Mammary epithelial cell (primary cell): ENCODE measurements at regions of chr17 and their contacts with region 1.

Region 1: GRCh38 chr17:41648411-41649195 is 24.2 kb upstream of the KRT17 start:
- DNase-seq: peak; percentile 76
- H3K4me3 ChIP-seq: no peak overlapping the region
- H3K27ac ChIP-seq: peak overlapping the region; percentile 77
- H3K4me1 ChIP-seq: peaks cover 70% of the 10 kb centered on the region
- H3K27me3 ChIP-seq: no peaks in the 10 kb centered on the region
- CTCF ChIP-seq: peak; percentile 83 to 97

Region 2: DNA sequence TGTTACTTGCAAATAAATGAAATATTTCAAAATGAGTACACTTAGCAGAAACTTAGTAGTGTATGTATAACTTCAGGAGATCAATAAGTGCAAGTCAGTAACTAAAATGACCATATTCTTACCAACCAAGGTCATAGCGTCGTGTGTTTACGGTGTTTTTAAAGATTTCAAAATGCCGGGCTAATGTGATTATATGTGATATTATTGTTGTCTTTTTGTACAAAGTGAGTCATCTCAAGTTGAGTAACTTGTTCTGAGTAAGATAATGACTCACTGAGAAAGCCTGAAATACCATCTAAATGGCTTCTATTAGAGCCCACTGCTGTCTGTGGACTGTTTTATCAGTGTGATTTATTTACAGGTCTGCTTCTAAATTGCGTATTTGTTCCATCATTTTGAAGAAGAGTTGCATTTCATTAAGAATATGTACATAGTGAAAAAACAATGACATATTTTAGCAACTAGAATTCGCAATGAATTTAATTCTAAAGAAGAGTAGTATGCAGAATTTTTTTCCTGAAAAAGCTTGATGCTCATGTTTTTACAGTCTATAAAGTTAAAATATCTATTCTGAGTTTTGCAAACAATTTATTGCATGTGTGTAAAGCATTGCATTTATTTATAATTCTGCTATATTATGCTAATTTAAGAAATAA is 794.3 kb before region 1 on chr17:
- CTCF ChIA-PET with region 1: interaction called, 18 read pairs
- dilution Hi-C with region 1: no loop called
- in situ Hi-C with region 1: no loop called
- intact Hi-C with region 1: loop called (anchors 1 kb)
- DNase-seq: peak; percentile 84
- H3K4me3 ChIP-seq: no peak overlapping the region
- H3K27ac ChIP-seq: no peak overlapping the region
- H3K4me1 ChIP-seq: peaks cover 20% of the 10 kb centered on the region
- H3K27me3 ChIP-seq: no peaks in the 10 kb centered on the region
- CTCF ChIP-seq: no peak

Region 3: DNA sequence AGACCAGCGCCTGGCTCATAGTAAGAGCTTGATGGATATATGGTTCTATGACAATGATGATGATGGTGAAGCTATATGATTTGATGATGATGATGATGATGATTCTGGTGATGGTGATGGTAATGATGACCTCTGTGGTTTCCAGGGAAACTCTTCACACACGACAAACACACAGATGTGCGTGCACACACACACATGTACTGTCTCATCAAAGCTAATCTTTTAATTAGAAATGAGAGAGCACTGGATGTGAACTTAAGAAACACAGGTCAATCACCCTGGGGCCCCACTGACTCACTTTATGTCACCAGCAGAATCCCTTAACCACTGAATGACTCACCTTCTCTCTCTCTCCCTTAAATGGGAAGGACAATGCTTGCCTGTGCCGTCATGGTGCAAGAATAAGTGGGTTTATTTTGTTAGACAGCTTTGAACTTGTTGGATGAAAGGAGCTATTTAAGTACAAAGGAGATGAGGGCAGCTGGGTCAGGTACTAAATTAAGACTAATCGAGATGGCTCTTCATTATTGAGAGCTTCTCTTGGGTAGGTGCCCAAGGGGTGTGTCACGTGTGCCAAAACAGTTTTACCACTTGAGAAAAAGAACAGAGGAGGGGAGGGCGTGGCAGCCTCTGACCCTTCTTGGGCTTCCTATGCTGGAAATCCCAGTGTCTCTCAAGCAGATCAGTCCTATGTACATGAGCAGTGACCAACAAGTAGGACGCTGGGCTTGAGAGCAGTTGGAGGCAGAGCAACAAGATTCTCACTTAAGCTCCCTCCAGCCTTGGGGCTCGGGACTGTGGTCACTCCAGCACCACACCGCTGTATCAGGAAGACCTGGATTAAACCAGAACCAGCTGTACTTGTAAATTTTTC is 244.6 kb before region 1 on chr17:
- CTCF ChIA-PET with region 1: no interaction called
- dilution Hi-C with region 1: loop called (anchors 5 kb)
- in situ Hi-C with region 1: no loop called
- intact Hi-C with region 1: loop called (anchors 5 kb)
- DNase-seq: peak; percentile 100
- H3K4me3 ChIP-seq: no peak overlapping the region
- H3K27ac ChIP-seq: peak overlapping the region; percentile 94
- H3K4me1 ChIP-seq: peaks cover 32% of the 10 kb centered on the region
- H3K27me3 ChIP-seq: no peaks in the 10 kb centered on the region
- CTCF ChIP-seq: no peak

Region 4: DNA sequence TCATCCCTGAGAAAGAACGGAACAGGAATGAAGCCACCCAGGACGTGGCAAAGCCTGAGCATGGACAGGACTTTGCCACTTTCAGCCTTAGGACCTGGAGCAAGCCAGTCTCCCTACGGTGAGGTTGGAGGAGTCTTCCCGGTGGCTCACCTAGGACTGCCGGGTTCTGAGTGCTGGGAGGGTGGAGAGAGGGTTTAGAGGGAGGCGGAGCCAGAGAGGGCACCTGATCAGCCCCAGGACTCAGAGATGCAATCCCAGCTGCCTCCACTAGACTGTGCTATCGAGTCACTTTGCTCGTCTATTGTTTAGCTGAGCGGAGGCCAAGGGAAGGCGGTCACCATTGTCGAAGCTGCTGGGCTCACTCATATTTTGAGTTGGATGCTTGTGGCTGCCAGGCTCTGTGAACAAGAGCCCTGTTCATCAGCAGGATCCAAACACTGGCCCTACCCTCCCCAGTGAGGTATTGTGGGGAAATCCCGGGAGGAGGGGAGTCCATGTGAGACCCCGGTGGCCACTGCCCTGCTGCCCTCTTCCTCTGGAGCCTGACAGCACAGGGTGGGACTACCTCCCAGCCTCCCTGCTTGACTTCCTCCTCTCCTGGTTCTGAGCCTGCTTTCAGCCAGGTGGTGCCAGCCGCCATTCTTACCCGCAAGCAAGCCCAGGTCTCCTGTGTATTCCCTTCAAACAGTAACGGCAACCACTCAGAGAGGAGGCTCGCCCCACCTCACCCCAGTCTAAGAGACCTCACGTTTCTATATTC is 68.9 kb before region 1 on chr17:
- CTCF ChIA-PET with region 1: interaction called, 3 read pairs
- dilution Hi-C with region 1: no loop called
- in situ Hi-C with region 1: no loop called
- intact Hi-C with region 1: loop called (anchors 1 kb)
- DNase-seq: peak; percentile 98
- H3K4me3 ChIP-seq: no peak overlapping the region
- H3K27ac ChIP-seq: peak overlapping the region; percentile 97
- H3K4me1 ChIP-seq: peaks cover 63% of the 10 kb centered on the region
- H3K27me3 ChIP-seq: no peaks in the 10 kb centered on the region
- CTCF ChIP-seq: peak; percentile 93 to 96

Region 5: GRCh38 chr17:41615454-41615853 is 33.1 kb before region 1 on chr17:
- CTCF ChIA-PET with region 1: no interaction called
- dilution Hi-C with region 1: loop called (anchors 5 kb)
- in situ Hi-C with region 1: no loop called
- intact Hi-C with region 1: no loop called
- DNase-seq: peak; percentile 95
- H3K4me3 ChIP-seq: no peak overlapping the region
- H3K27ac ChIP-seq: no peak overlapping the region
- H3K4me1 ChIP-seq: peaks cover 41% of the 10 kb centered on the region
- H3K27me3 ChIP-seq: no peaks in the 10 kb centered on the region
- CTCF ChIP-seq: peak; percentile 15 to 31

Region 6: DNA sequence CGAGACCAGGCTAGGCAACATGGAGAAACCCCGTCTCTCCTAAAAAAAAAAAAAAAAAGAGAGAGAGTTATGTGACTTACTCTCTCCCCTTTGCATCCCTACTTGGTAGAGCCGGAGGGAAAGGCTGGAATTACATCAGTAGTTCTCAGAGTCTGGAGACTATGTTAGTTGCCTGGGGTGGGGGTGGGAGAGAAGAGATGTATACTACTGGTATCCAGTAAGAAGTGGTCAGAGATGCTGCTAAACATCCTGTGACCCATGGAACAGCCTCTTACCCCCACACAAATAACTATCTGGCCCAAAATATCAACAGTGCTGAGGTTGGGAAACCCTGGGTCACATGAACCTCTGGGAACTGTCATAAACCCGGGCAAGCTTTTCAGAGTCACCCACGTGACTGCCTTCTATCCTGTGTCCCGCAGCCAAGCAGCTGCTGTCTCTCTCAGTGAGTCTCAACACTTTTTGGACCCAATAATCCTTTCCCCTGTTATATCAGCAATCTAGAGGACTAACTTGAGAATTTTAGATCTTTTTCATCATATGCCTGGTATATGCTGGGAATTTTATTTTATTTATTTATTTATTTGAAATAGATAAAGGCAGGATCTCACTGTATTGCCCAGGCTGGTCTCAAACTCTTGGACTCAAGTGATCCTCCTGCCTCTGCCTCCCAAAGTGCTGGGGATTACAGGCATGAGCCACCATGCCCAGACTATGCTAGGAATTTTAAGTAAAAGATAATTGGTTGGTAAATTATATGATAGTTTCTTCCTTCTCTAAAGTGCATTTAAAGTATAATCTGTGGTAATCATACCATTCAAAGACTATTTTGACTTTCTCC is 48.7 kb after region 1 on chr17:
- CTCF ChIA-PET with region 1: no interaction called
- dilution Hi-C with region 1: no loop called
- in situ Hi-C with region 1: no loop called
- intact Hi-C with region 1: no loop called
- DNase-seq: no peak
- H3K4me3 ChIP-seq: no peak overlapping the region
- H3K27ac ChIP-seq: no peak overlapping the region
- H3K4me1 ChIP-seq: no peaks in the 10 kb centered on the region
- H3K27me3 ChIP-seq: no peaks in the 10 kb centered on the region
- CTCF ChIP-seq: no peak

Region 7: GRCh38 chr17:41750862-41751261 is 102.3 kb after region 1 on chr17:
- CTCF ChIA-PET with region 1: no interaction called
- dilution Hi-C with region 1: no loop called
- in situ Hi-C with region 1: no loop called
- intact Hi-C with region 1: no loop called
- DNase-seq: no peak
- H3K4me3 ChIP-seq: no peak overlapping the region
- H3K27ac ChIP-seq: no peak overlapping the region
- H3K4me1 ChIP-seq: no peaks in the 10 kb centered on the region
- H3K27me3 ChIP-seq: no peaks in the 10 kb centered on the region
- CTCF ChIP-seq: no peak